Transverse colon (tissue), 4 donors: ENCODE measurements at regions of chr17 and their contacts with region 1.

Region 1: DNA sequence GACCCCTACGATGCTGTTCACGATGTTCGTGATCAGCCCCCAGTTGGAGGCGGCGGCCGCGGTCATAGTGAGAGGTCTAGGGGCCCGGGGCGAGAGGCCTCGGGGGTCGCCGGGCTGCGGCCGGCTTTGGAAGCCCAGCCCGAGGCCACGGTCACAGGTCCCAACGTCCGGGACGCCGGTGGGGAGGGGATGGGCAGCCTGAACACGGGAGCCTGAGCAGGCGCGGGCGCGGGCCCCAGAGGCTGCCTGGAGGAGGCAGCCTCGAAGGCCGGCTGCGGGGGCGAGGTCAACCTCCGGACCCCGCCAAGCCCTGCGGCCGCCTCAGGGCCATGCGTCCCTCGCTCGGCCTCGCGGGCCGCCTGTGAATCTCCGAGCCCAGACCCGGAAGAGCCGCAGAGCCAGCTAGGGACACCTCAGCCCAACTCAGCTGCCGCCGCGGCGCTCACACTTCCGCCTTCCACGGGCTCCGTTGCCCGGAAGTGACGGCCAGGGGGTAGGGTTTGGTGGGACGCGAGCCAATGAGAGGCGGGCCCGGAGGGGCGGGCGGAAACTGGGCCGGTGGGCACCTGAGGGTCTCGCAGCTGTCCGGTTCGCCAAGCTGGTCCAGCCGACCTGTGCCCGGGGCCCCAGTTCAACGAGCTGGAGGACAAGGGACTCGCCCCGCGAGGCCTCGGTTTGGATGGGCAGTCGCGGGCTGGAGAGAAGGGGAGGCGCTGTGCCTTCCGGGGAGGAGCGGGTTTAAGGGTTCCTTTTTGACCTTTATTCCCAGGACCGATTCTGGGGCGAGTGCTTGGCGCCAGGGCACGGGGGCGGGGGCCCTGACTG is at the start of gene SLC38A10:
- DNase-seq: peak; percentile 95
- H3K4me3 ChIP-seq: peak within 1 kb of the TSS; percentile 78 to 95 (median 86)
- H3K27ac ChIP-seq: peak within 1 kb of the TSS; percentile 93 to 98 (median 94)
- H3K4me1 ChIP-seq: peaks cover 8 to 42% (median 35%) of the 10 kb centered on the region in 4 donors
- H3K27me3 ChIP-seq: no peaks in the 10 kb centered on the region
- CTCF ChIP-seq: no peak
- EP300 ChIP-seq: no peak
- POLR2A ChIP-seq: peak; percentile 98
- total RNA-seq, gene SLC38A10: 94.9 to 113 (median 98.9) TPM

Region 2: GRCh38 chr17:81125573-81126081 is 169.4 kb before region 1 on chr17:
- in situ Hi-C with region 1: no loop called
- intact Hi-C with region 1: no loop called
- DNase-seq: no peak
- H3K4me3 ChIP-seq: no peak overlapping the region
- H3K27ac ChIP-seq: no peak overlapping the region
- H3K4me1 ChIP-seq: no peaks in the 10 kb centered on the region
- H3K27me3 ChIP-seq: no peaks in the 10 kb centered on the region
- CTCF ChIP-seq: no peak
- EP300 ChIP-seq: no peak
- POLR2A ChIP-seq: no peak

Region 3: GRCh38 chr17:81394921-81395599 is 100.0 kb after region 1 on chr17 and contains the start of gene BAHCC1:
- in situ Hi-C with region 1: loop called in 1 of 4 experiments (anchors 25 kb)
- intact Hi-C with region 1: loop called (anchors 10 kb)
- DNase-seq: peak; percentile 100
- H3K4me3 ChIP-seq: peak within 1 kb of the TSS; percentile 54 to 88 (median 82)
- H3K27ac ChIP-seq: peak within 1 kb of the TSS; percentile 97 to 99 (median 98)
- H3K4me1 ChIP-seq: peaks cover 19 to 42% (median 33%) of the 10 kb centered on the region in 4 donors
- H3K27me3 ChIP-seq: peaks cover 13% of the 10 kb centered on the region
- CTCF ChIP-seq: no peak
- EP300 ChIP-seq: no peak
- POLR2A ChIP-seq: peak; percentile 98
- total RNA-seq, gene BAHCC1: 8.7 to 133 (median 12.4) TPM